ENCODE measurements at regions of chr11 and their contacts with region 1.

Region 1: DNA sequence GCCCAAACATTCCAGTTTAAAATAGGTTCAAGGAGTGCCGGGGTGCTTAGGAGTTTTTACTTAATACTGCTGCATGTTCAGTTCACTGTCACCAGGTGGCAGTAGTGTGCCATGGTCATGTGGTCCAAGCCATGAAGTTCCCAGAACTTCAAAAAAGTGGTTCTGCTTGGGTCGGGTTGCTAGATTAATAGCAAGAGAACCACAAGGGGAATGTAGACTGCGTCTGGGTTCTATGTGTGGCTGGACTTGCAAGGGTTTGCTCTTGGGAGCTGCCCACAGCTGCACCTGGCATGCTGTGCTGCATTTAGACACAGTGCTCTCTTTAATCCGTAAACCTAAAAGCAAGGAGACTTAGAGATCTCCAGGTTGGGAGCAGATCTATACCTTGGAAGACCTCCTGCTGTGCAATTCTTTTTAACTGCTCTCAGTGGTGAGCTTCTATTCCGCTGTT is 6.5 kb upstream of the SPON1 start:
- DNase-seq: peak in 41 of 42 donors; percentile 14 to 85 (median 66)

Region 2: DNA sequence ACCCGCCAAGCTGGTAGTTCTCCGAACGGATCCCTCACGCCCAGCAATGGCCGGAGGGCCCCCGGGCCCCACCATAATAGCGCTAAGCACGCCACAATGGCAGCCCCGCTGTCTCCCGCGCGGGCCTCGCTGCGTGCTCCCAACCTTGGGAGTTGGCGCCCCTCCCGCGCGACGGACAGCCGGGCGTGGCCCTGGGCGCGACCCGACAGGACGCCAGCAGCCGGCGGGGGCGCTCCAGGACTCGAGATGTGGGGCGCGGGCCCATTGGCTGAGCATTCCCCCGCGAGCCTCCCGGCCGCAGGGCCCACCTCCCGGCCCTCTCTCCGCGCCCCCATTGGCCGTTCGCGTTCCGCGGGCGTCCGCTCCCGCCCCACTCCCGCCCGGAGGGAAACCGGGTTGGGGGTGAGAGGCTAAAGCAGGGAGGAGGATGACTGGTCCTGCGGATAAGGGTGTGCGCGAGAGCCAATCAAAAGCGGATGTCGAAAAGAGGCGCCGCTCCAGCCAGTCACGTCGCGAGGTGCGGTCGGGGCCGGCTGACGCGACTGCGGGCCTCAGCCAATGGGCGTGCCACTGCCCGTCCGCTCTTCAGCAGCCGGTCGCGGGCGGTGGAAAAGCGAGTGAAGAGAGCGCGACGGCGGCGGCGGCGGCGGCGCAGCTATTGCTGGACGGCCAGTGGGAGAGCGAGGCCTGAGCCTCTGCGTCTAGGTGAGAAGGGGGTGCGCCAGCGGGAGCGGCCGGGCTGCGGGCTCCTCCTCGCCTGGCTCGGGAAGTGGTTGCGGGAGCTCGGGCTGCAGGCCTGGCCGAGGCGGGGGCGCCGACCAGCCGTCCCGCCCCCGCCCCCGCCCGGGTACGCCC is 287.7 kb before region 1 on chr11 and contains the start of gene FAR1:
- intact Hi-C with region 1: loop called (anchors 5 kb)
- DNase-seq: peak; percentile 94 to 100 (median 99)

Region 3: DNA sequence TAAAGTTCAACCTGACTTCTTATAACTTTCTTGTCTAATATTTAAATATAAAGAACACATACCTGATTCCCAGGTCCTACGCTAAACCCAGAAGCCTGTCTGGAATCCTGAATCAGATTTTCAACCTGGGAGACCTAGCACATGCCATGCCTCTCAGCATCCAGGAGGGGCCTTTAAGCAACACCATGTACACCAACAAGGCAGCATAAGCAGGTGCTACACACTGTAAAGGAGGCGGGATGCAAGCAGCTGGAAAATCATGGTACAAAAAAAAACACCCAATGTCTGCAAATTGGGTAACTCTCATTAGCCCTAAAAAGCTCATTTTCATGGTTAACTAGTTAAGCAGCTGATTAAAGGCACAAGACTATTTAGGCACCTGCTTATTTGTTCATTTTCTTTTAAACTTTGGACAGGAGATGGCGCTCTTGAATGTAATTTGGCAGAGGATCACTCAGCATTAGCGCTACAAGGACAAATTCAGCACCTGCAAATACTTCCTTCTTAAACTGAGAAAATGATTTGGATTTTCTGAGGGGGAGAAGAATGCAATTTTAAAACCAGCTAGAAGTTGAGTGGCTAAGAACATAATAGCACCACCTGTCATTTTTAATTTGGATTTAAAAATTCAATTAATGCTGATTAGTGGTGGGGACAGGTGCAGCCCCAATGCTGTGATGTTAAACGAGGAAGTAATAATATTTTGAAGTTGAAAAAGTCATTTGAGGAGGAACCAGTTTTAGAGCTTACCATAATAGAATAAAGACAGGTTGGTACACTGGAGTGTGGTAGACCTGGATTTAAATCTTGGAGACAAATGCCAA is 183.6 kb before region 1 on chr11:
- intact Hi-C with region 1: loop called (anchors 5 kb)
- DNase-seq: peak in 13 of 42 donors; percentile 15 to 69 (median 42)

Region 4: DNA sequence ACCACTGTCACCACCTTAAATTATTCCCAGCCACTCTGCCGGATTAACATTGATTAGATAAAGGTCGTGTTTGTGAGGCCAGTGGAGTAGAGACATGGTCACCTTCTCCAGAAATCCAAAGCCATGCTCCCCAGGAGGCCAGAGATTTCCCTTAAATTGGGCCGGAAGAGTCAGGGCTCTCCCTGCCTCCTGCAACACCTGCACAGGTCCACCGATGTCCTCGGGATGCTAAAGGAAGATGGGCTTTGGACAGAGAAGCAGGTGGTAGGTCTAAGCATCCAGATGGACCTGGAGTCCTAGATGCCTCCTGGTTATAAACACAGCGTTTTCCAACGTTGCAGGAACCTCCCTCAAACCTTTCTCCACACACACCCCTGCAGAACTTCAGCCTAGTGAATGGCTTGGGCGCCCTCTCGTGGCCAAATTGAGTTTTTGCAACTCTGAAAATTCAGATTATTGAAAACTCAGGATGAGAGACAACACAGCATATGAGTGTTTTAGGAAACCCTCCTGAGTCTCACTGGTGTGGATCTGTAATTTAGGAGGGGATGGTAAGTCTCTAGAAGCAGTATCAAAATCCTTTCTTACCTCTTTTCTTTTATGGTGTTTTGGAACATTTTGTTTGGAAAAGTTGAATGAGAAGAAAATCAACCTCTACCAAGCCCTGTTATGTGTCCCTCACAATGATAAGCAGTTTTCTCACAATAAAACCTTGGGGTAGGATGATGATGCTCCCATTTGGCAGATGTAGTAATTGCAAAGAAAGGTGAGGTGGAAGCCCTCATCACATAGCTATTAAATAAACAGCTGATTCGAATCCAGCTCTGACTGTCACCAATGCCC is 293.3 kb after region 1 on chr11:
- intact Hi-C with region 1: loop called (anchors 5 kb)
- DNase-seq: peak; percentile 41 to 88 (median 75)

Measured in head of caudate nucleus (tissue), 42 donors.